ENCODE measurements at regions of chr2 and their contacts with region 1.

Region 1: GRCh38 chr2:232438951-232439757 is 16.8 kb upstream of the ALPI start:
- DNase-seq: peak in 1 of 5 donors; percentile 60
- ATAC-seq: peak; percentile 30 to 58 (median 56)
- H3K4me3 ChIP-seq: no peak overlapping the region
- H3K27ac ChIP-seq: no peak overlapping the region
- H3K4me1 ChIP-seq: peaks cover 0 to 4% (median 0%) of the 10 kb centered on the region in 12 donors
- H3K27me3 ChIP-seq: peaks cover 0 to 6% (median 0%) of the 10 kb centered on the region in 9 donors
- CTCF ChIP-seq: peak; percentile 40 to 68 (median 54)
- POLR2A ChIP-seq: no peak

Region 2: GRCh38 chr2:231907787-231908186 is 531.4 kb before region 1 on chr2:
- intact Hi-C with region 1: loop called (anchors 1 to 5 kb)
- DNase-seq: no peak
- ATAC-seq: no peak
- H3K4me3 ChIP-seq: no peak overlapping the region
- H3K27ac ChIP-seq: no peak overlapping the region
- H3K4me1 ChIP-seq: peaks cover 0 to 2% (median 0%) of the 10 kb centered on the region in 12 donors
- H3K27me3 ChIP-seq: no peaks in the 10 kb centered on the region
- CTCF ChIP-seq: no peak
- POLR2A ChIP-seq: no peak

Region 3: GRCh38 chr2:232348936-232349335 is 90.2 kb before region 1 on chr2:
- intact Hi-C with region 1: loop called in 1 of 10 experiments (anchors 10 kb)
- DNase-seq: peak in 1 of 5 donors; percentile 32
- ATAC-seq: peak in 3 of 4 donors; percentile 14 to 40 (median 39)
- H3K4me3 ChIP-seq: no peak overlapping the region
- H3K27ac ChIP-seq: no peak overlapping the region
- H3K4me1 ChIP-seq: peaks cover 0 to 20% (median 0%) of the 10 kb centered on the region in 12 donors
- H3K27me3 ChIP-seq: peaks cover 34 to 60% (median 47%) of the 10 kb centered on the region in 9 donors
- CTCF ChIP-seq: no peak
- POLR2A ChIP-seq: no peak

Region 4: GRCh38 chr2:232658196-232658785 is 219.1 kb after region 1 on chr2:
- intact Hi-C with region 1: no loop called
- DNase-seq: no peak
- ATAC-seq: peak in 2 of 4 donors; percentile 45 to 58
- H3K4me3 ChIP-seq: no peak overlapping the region
- H3K27ac ChIP-seq: no peak overlapping the region
- H3K4me1 ChIP-seq: peaks cover 0 to 22% (median 7%) of the 10 kb centered on the region in 12 donors
- H3K27me3 ChIP-seq: no peaks in the 10 kb centered on the region
- CTCF ChIP-seq: peak in 2 of 12 donors; percentile 12 to 29
- POLR2A ChIP-seq: no peak

Measured in heart left ventricle (tissue), 16 donors.